CD8-positive, alpha-beta T cell (primary cell): ENCODE measurements at regions of chr1 and their contacts with region 1.

Region 1: DNA sequence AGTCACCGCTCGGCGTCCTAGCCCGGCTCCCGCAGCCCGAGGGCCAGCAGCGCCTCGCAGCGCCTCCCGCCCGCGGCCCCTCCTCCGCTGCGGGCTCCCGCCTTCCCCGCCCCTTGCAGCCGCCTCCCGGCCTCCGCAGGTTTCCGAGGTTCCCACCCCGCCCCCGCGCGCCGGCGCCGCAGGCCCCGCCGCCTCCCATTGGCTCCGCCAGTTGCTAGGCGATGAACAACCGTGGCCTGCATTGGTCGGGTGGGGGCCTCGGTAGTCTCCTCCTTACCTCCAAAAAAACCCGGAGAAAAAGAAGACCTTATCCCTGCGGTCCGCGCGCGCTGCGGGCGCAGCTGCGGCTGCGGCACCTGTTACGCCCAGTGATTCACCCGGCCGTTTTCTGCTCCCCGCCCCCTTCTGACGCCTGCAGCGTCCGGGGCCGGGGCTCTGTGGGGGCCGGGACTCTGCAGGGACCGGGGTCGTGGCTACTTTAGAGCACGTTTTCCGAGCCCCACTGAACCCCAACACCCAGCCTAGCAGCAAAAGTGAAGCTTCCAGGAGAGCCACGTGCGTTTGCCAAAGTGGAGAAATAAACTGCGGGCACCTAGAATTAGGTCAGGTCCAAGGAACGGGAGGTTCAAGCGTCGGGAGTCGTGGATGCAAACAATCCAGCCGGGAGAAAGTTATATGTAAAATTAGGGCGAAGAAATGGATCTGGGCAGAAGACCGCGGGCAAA is at the start of gene SSX2IP:
- DNase-seq: peak; percentile 98 to 100 (median 99)
- ATAC-seq: peak; percentile 81
- H3K4me3 ChIP-seq: peak within 1 kb of the TSS; percentile 83 to 87
- H3K4me3 Mint-ChIP-seq: peak within 1 kb of the TSS; percentile 87
- H3K27ac ChIP-seq: peak within 1 kb of the TSS; percentile 85 to 88
- H3K27ac Mint-ChIP-seq: peak within 1 kb of the TSS; percentile 97
- H3K4me1 ChIP-seq: peaks cover 38% of the 10 kb centered on the region
- H3K4me1 Mint-ChIP-seq: peaks cover 59% of the 10 kb centered on the region
- H3K27me3 ChIP-seq: no peaks in the 10 kb centered on the region
- H3K27me3 Mint-ChIP-seq: no peaks in the 10 kb centered on the region
- CTCF ChIP-seq: no peak
- total RNA-seq, gene SSX2IP: 11.4 to 12.3 TPM

Region 2: DNA sequence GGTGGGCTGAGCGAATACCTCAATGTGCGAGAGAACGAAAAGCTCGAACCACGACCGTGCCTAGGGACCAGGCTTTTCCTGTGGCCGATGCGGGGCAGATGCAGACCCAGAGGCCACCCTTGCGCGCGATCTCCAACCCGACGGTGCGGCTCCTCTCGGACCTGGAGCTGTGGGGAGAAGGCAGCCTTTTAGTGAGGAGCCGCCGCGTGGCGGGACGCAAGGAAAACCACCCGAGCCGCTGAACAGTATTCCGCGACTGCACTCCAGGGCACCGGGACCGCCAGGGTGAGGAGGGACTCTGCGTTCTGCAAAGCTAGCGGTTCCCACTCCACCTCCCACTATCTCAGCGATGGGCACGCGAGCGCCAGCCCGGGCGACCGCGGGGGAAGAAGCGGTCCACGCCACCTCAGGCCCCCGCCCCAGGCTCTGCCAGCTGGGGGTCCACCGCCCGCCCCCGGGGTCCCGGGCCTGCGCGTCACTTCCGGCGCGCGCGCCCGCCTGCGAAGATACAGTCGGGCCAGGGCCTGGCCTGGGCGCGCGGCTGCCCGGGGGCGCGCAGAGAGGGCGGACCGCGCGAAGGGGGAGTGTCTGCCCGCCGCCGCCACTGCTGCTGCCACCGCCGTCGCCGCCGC is 613.0 kb before region 1 on chr1:
- CTCF ChIA-PET with region 1: interaction called, 3 read pairs
- POLR2A ChIA-PET with region 1: interaction called, 3 read pairs
- intact Hi-C with region 1: loop called (anchors 1 to 2 kb)
- DNase-seq: peak; percentile 48 to 88 (median 74)
- ATAC-seq: peak; percentile 89
- H3K4me3 ChIP-seq: peak overlapping the region; percentile 90 to 91
- H3K4me3 Mint-ChIP-seq: peak overlapping the region; percentile 87
- H3K27ac ChIP-seq: peak overlapping the region; percentile 72 to 76
- H3K27ac Mint-ChIP-seq: peak overlapping the region; percentile 86
- H3K4me1 ChIP-seq: peaks cover 14% of the 10 kb centered on the region
- H3K4me1 Mint-ChIP-seq: peaks cover 13% of the 10 kb centered on the region
- H3K27me3 ChIP-seq: no peaks in the 10 kb centered on the region
- H3K27me3 Mint-ChIP-seq: no peaks in the 10 kb centered on the region
- CTCF ChIP-seq: no peak

Region 3: DNA sequence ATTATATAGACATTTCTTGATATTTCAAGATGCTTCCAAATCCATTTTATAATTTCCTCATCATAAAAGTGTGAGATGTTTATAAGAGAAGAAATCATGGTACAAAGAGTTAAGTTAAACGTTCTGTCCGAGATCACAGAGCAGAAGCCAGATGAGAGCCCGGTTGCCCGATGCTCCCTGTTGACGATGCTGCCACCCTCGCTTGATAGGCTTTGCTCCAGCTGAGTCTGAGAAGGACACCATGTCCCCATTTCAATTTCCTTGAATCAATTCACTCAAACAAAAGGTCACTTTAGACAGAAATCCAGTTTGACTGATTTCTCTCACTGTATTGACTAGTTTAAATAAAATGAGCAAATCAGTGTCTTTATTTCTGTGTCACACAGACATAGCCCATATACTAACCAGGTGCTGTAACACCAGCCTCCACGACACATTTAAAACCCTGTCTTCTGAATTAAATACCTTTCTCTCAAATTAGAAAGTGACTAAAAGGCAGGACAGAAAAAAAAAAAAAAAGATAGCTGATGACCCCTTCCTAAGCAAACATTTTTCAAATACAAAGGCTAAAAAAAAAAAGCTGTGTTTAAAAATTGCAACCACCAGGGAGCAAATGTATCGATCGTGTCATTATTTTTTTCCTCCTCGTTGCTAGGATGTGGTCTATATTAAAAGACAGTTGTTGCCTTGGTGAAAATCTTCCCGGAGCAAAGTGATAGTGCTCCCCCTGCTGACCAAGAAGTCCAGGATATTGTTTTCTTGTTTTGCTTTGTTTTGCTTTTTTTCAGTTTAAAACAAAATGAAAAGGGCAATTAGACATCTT is 257.1 kb before region 1 on chr1:
- CTCF ChIA-PET with region 1: no interaction called
- POLR2A ChIA-PET with region 1: no interaction called
- intact Hi-C with region 1: loop called in 1 of 2 experiments (anchors 5 kb)
- DNase-seq: peak; percentile 31 to 92 (median 53)
- ATAC-seq: peak; percentile 73
- H3K4me3 ChIP-seq: peak overlapping the region; percentile 34 to 46
- H3K4me3 Mint-ChIP-seq: peak overlapping the region; percentile 76
- H3K27ac ChIP-seq: peak overlapping the region; percentile 73 to 76
- H3K27ac Mint-ChIP-seq: peak overlapping the region; percentile 75
- H3K4me1 ChIP-seq: peaks cover 49% of the 10 kb centered on the region
- H3K4me1 Mint-ChIP-seq: peaks cover 9% of the 10 kb centered on the region
- H3K27me3 ChIP-seq: no peaks in the 10 kb centered on the region
- H3K27me3 Mint-ChIP-seq: no peaks in the 10 kb centered on the region
- CTCF ChIP-seq: peak; percentile 65

Region 4: GRCh38 chr1:84573967-84574842 is 116.4 kb before region 1 on chr1 and contains the start of gene CTBS:
- CTCF ChIA-PET with region 1: no interaction called
- POLR2A ChIA-PET with region 1: interaction called, 3 read pairs
- intact Hi-C with region 1: loop called (anchors 1 kb)
- DNase-seq: peak; percentile 67 to 93 (median 85)
- ATAC-seq: peak; percentile 91
- H3K4me3 ChIP-seq: peak within 1 kb of the TSS; percentile 81 to 92
- H3K4me3 Mint-ChIP-seq: peak within 1 kb of the TSS; percentile 96
- H3K27ac ChIP-seq: peak within 1 kb of the TSS; percentile 94 to 96
- H3K27ac Mint-ChIP-seq: peak within 1 kb of the TSS; percentile 99
- H3K4me1 ChIP-seq: peaks cover 20% of the 10 kb centered on the region
- H3K4me1 Mint-ChIP-seq: peaks cover 42% of the 10 kb centered on the region
- H3K27me3 ChIP-seq: no peaks in the 10 kb centered on the region
- H3K27me3 Mint-ChIP-seq: no peaks in the 10 kb centered on the region
- CTCF ChIP-seq: no peak
- total RNA-seq, gene CTBS: 17.3 to 19.7 TPM

Region 5: GRCh38 chr1:84753516-84754385 is 63.2 kb after region 1 on chr1:
- CTCF ChIA-PET with region 1: interaction called, 4 read pairs
- POLR2A ChIA-PET with region 1: no interaction called
- intact Hi-C with region 1: loop called in 1 of 2 experiments (anchors 1 kb)
- DNase-seq: peak; percentile 56 to 86 (median 73)
- ATAC-seq: peak; percentile 93
- H3K4me3 ChIP-seq: no peak overlapping the region
- H3K4me3 Mint-ChIP-seq: no peak overlapping the region
- H3K27ac ChIP-seq: no peak overlapping the region
- H3K27ac Mint-ChIP-seq: no peak overlapping the region
- H3K4me1 ChIP-seq: no peaks in the 10 kb centered on the region
- H3K4me1 Mint-ChIP-seq: no peaks in the 10 kb centered on the region
- H3K27me3 ChIP-seq: no peaks in the 10 kb centered on the region
- H3K27me3 Mint-ChIP-seq: peaks cover 19% of the 10 kb centered on the region
- CTCF ChIP-seq: peak; percentile 94

Region 6: GRCh38 chr1:84763912-84764663 is 73.5 kb after region 1 on chr1:
- CTCF ChIA-PET with region 1: no interaction called
- POLR2A ChIA-PET with region 1: no interaction called
- intact Hi-C with region 1: no loop called
- DNase-seq: no peak
- ATAC-seq: no peak
- H3K4me3 ChIP-seq: no peak overlapping the region
- H3K4me3 Mint-ChIP-seq: no peak overlapping the region
- H3K27ac ChIP-seq: no peak overlapping the region
- H3K27ac Mint-ChIP-seq: no peak overlapping the region
- H3K4me1 ChIP-seq: no peaks in the 10 kb centered on the region
- H3K4me1 Mint-ChIP-seq: peaks cover 4% of the 10 kb centered on the region
- H3K27me3 ChIP-seq: no peaks in the 10 kb centered on the region
- H3K27me3 Mint-ChIP-seq: peaks cover 6% of the 10 kb centered on the region
- CTCF ChIP-seq: no peak

Region 7: DNA sequence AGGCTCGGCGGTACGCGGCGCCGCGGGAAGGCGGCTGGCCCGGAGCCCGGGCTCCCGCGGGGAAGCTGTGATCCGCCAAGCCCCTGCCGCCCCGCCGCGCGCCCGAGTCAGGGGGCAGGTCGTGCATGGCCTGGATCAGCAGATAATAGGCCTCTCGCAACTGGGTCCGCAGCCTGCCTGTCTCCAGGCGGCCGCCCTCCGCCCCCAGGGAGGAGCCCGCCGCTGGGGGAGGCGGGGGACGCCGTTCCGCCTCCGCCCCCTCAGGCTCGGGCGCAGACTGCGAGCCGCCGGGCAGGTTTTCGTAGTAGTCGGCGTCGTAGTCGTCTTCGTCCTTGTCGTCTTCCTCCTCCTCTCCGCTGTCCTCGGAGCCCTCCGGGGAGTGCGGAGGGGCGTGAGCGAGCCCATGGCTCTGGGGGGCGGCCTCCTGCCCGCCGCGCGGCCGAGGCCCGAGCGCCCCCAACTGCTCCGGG is 510.3 kb after region 1 on chr1 and contains the start of gene SYDE2:
- CTCF ChIA-PET with region 1: no interaction called
- POLR2A ChIA-PET with region 1: no interaction called
- intact Hi-C with region 1: loop called in 1 of 2 experiments (anchors 5 kb)
- DNase-seq: peak; percentile 70 to 91 (median 79)
- ATAC-seq: peak; percentile 83
- H3K4me3 ChIP-seq: peak within 1 kb of the TSS; percentile 68 to 94
- H3K4me3 Mint-ChIP-seq: peak within 1 kb of the TSS; percentile 100
- H3K27ac ChIP-seq: peak within 1 kb of the TSS; percentile 63 to 94
- H3K27ac Mint-ChIP-seq: peak within 1 kb of the TSS; percentile 100
- H3K4me1 ChIP-seq: peaks cover 27% of the 10 kb centered on the region
- H3K4me1 Mint-ChIP-seq: peaks cover 48% of the 10 kb centered on the region
- H3K27me3 ChIP-seq: peaks cover 0 to 5% of the 10 kb centered on the region in 2 experiments
- H3K27me3 Mint-ChIP-seq: peaks cover 4% of the 10 kb centered on the region
- CTCF ChIP-seq: no peak
- total RNA-seq, gene SYDE2: 6.2 to 6.4 TPM

Region 8: GRCh38 chr1:86395771-86396497 is 1705.4 kb after region 1 on chr1 and contains the start of gene ODF2L:
- CTCF ChIA-PET with region 1: no interaction called
- POLR2A ChIA-PET with region 1: no interaction called
- intact Hi-C with region 1: loop called in 1 of 2 experiments (anchors 10 kb)
- DNase-seq: peak; percentile 74 to 91 (median 89)
- ATAC-seq: peak; percentile 98
- H3K4me3 ChIP-seq: peak within 1 kb of the TSS; percentile 91 to 97
- H3K4me3 Mint-ChIP-seq: peak within 1 kb of the TSS; percentile 99
- H3K27ac ChIP-seq: peak within 1 kb of the TSS; percentile 85 to 91
- H3K27ac Mint-ChIP-seq: peak within 1 kb of the TSS; percentile 97
- H3K4me1 ChIP-seq: peaks cover 16% of the 10 kb centered on the region
- H3K4me1 Mint-ChIP-seq: peaks cover 53% of the 10 kb centered on the region
- H3K27me3 ChIP-seq: no peaks in the 10 kb centered on the region
- H3K27me3 Mint-ChIP-seq: no peaks in the 10 kb centered on the region
- CTCF ChIP-seq: no peak
- total RNA-seq, gene ODF2L: 49.3 to 49.6 TPM